ENCODE measurements at regions of chr7 and their contacts with region 1.

Region 1: DNA sequence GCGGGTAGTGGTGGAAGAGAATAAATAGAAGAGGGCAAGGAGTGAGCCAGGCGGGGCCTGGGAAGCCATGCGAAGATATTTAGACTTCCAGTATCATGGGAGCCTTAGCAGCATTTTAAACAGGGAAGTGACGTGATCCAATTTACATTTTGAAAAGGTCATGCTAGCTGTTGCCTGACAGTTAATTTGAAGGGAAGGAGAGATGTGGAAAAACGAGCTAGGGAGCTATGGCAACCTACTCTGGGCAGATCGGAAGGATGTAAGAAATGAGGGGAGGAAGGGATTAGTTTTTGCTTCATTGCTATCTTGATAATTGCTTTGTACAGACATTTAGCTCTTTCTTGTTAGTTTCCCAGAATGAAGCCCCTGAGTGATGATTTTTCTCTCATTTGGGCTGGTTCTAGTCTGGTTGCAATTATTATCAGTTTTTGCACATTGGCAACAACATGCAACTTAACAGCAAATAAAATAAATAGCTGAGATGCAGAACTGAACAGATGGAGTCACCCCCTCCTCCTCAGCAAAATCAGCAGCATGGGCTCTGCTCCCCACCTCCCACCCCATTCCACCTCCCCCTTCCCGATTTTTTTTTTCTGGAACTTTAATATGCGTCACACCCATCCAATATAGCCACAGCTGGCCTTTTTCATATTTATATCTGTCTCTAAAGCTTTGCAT is 13.0 kb upstream of the CALU start:
- DNase-seq: no peak
- H3K4me3 ChIP-seq: no peak overlapping the region
- H3K27ac ChIP-seq: no peak overlapping the region
- H3K4me1 ChIP-seq: no peaks in the 10 kb centered on the region
- H3K27me3 ChIP-seq: no peaks in the 10 kb centered on the region

Region 2: DNA sequence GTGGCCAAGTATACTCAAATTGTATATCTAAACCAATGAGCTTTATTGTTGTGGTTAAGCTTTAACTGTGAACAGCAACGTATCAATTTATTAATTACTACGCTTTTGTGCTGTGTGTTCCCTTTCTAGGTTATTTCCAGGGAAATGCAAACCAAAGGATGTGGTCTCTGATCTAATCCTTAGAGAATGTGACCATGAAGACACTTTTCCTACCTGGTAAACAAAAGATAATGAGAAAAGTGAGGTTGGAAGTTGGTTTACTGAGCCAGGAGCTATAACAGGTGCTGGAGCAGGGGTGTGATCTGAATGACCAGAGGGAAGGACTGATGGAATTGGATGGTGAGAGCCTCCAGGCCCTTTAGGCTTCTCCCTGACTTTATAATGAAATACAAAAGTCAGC is 12.4 kb before region 1 on chr7:
- CTCF ChIA-PET with region 1: interaction called, 11 read pairs
- POLR2A ChIA-PET with region 1: no interaction called
- DNase-seq: no peak
- H3K4me3 ChIP-seq: no peak overlapping the region
- H3K27ac ChIP-seq: no peak overlapping the region
- H3K4me1 ChIP-seq: no peaks in the 10 kb centered on the region
- H3K27me3 ChIP-seq: peaks cover 0 to 3% (median 2%) of the 10 kb centered on the region in 5 experiments

Region 3: DNA sequence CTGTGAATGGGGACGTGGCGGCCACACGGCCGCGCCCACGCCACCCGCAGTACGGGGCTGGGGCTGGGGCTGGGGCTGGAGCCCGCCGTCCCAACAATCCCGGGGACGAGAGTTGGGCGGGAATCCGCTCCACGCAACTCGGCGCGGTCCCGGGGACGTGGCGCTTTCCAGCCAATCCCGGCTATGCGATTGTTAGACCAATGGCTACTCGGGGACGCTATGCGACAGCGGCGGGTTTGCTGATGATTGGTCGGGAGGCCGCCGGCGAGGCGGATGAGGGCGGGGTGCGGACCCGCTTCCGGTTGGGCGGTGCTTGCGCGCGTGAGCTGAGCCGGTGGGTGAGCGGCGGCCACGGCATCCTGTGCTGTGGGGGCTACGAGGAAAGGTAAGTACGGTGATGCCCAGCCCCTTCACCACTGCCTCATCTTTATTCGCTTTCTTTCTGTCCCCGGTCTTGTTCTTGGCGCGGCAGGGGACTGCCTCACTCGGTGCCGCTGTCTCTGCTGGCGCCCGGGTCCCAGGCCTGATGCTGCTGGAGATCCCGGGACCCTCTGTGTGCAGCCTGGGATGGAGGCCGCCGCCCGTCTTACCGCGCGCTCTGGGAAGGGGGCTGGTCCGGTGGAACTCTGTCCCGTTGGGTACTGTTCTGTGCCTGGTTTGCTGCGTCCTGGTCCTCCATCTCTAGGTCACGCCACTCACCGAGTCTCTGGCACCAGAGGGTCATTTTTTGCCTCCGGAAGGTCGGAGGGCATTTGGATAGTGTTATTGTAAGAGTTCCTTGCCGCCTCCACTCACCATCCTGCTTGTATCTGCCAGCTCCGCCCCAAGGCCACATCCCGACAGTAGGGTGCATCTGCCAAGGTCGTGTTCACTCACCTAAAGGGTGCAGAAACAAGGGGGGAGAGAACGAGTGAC is 13.1 kb after region 1 on chr7 and contains the start of gene CALU:
- CTCF ChIA-PET with region 1: interaction called, 25 read pairs
- POLR2A ChIA-PET with region 1: interaction called, 5 read pairs
- DNase-seq: peak; percentile 91 to 96 (median 96)
- H3K4me3 ChIP-seq: peak within 1 kb of the TSS; percentile 87 to 99 (median 93)
- H3K27ac ChIP-seq: peak within 1 kb of the TSS; percentile 59 to 86
- H3K4me1 ChIP-seq: peaks cover 7 to 34% (median 24%) of the 10 kb centered on the region in 4 experiments
- H3K27me3 ChIP-seq: no peaks in the 10 kb centered on the region

Measured in common myeloid progenitor, CD34-positive (primary cell).